ENCODE measurements at regions of chr7 and their contacts with region 1.

Region 1: GRCh38 chr7:93890464-93891068 is at the start of gene TFPI2:
- DNase-seq: peak; percentile 89 to 94
- H3K4me3 ChIP-seq: peak within 1 kb of the TSS; percentile 91
- H3K27ac ChIP-seq: peak within 1 kb of the TSS; percentile 68
- H3K4me1 ChIP-seq: peaks cover 17% of the 10 kb centered on the region
- H3K27me3 ChIP-seq: no peaks in the 10 kb centered on the region
- CTCF ChIP-seq: 0 out of 2 replicates have a peak, but pooled peaks have one; percentile 0
- total RNA-seq, gene TFPI2: 67.3 and 86.1 TPM in 2 replicates

Region 2: GRCh38 chr7:93245525-93246432 is 644.8 kb before region 1 on chr7:
- CTCF ChIA-PET with region 1: no interaction called
- POLR2A ChIA-PET with region 1: no interaction called
- intact Hi-C with region 1: loop called (anchors 10 kb)
- DNase-seq: no peak
- H3K4me3 ChIP-seq: no peak overlapping the region
- H3K27ac ChIP-seq: no peak overlapping the region
- H3K4me1 ChIP-seq: no peaks in the 10 kb centered on the region
- H3K27me3 ChIP-seq: no peaks in the 10 kb centered on the region
- CTCF ChIP-seq: peak; percentile 79

Region 3: GRCh38 chr7:94004024-94004951 is 113.7 kb after region 1 on chr7 and contains the start of gene BET1:
- CTCF ChIA-PET with region 1: no interaction called
- POLR2A ChIA-PET with region 1: no interaction called
- intact Hi-C with region 1: loop called (anchors 2 kb)
- DNase-seq: peak; percentile 85 to 88
- H3K4me3 ChIP-seq: peak within 1 kb of the TSS; percentile 91
- H3K27ac ChIP-seq: peak within 1 kb of the TSS; percentile 77
- H3K4me1 ChIP-seq: peaks cover 11% of the 10 kb centered on the region
- H3K27me3 ChIP-seq: no peaks in the 10 kb centered on the region
- CTCF ChIP-seq: no peak
- total RNA-seq, gene BET1: 39.5 and 43.0 TPM in 2 replicates

Region 4: DNA sequence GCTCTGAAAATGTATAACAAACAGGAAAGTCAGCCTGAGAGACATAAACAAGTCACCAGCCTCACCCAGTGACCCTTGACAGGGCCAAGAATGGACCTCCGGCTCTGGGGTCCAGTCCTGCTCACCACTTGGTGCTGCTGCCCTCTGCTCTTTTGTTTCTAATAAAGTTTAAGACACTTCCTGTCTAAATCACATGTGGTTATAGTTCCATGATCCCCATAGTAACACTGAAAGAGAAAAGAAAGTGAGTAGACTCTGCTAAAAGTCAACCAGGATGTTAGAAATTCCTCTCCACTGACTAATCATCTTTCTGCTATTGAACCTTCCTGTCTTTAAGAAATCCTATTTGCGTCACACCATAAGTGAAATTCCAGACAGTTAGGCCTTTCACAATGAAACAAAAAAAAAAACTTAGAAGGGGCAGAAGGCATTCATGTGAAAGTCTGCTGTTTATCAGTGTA is 292.8 kb after region 1 on chr7:
- CTCF ChIA-PET with region 1: no interaction called
- POLR2A ChIA-PET with region 1: interaction called, 4 read pairs
- intact Hi-C with region 1: loop called (anchors 2 kb)
- DNase-seq: peak; percentile 69 to 95
- H3K4me3 ChIP-seq: peak overlapping the region; percentile 27; the same call in 1 of the 2 replicates
- H3K27ac ChIP-seq: peak overlapping the region; percentile 91
- H3K4me1 ChIP-seq: peaks cover 24% of the 10 kb centered on the region
- H3K27me3 ChIP-seq: no peaks in the 10 kb centered on the region
- CTCF ChIP-seq: no peak

Region 5: DNA sequence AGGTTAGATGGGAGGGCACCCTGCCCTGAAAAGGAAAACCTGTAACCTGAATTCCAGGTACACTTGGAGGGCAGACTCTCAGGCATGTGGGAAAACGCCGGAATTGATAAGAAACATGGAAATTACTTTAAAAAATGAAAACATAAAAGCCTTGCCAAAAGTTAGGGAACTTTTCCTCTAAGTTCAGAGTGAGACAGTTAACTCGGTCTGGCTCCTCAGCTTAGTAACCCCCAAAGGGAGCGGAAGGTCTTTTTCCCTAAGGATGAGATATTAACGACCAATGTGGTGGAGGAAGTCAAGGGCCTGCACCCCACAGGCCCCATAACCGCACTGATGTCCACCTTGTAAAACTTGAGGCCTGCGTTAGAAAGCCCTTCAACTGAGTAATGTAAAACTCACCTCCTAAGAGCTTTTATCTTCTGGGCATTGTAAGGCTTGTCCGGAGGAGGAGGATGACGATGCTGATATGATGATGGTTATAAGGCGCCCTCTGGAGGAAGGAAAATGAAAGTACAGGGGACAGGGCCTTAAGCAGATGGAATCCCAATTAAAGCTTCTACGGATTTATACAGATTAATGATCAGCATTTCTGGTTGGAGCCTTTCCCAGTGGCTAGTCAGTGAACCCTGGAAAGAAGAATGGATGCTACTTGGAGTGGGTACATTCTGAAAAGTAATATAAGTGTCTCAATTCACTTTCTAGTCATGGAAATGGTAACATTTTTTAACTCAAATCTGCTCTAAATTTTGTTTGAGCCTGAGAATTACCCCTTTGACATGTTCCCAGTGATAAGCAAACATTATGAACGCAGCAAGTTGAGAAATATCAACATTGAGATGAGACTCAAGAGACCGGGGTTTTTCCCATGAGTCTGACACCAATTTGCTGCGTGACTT is 504.8 kb after region 1 on chr7:
- CTCF ChIA-PET with region 1: no interaction called
- POLR2A ChIA-PET with region 1: no interaction called
- intact Hi-C with region 1: loop called (anchors 5 kb)
- DNase-seq: no peak
- H3K4me3 ChIP-seq: no peak overlapping the region
- H3K27ac ChIP-seq: no peak overlapping the region
- H3K4me1 ChIP-seq: 0 out of 2 replicates have a peak, but pooled peaks cover under 1% of the 10 kb centered on the region
- H3K27me3 ChIP-seq: no peaks in the 10 kb centered on the region
- CTCF ChIP-seq: peak; percentile 66